Activated B cell treated with CpG ODN at 0.5 μM for 24 hours (primary cell): ENCODE measurements at regions of chr13 and their contacts with region 1.

Region 1: GRCh38 chr13:74077792-74078191 is 56.4 kb downstream of the KLF12 start:
- DNase-seq: no peak
- ATAC-seq: no peak
- H3K4me3 Mint-ChIP-seq: no peak overlapping the region
- H3K27ac Mint-ChIP-seq: no peak overlapping the region
- H3K4me1 Mint-ChIP-seq: peaks cover 73% of the 10 kb centered on the region
- H3K27me3 Mint-ChIP-seq: no peaks in the 10 kb centered on the region
- CTCF ChIP-seq: no peak

Region 2: DNA sequence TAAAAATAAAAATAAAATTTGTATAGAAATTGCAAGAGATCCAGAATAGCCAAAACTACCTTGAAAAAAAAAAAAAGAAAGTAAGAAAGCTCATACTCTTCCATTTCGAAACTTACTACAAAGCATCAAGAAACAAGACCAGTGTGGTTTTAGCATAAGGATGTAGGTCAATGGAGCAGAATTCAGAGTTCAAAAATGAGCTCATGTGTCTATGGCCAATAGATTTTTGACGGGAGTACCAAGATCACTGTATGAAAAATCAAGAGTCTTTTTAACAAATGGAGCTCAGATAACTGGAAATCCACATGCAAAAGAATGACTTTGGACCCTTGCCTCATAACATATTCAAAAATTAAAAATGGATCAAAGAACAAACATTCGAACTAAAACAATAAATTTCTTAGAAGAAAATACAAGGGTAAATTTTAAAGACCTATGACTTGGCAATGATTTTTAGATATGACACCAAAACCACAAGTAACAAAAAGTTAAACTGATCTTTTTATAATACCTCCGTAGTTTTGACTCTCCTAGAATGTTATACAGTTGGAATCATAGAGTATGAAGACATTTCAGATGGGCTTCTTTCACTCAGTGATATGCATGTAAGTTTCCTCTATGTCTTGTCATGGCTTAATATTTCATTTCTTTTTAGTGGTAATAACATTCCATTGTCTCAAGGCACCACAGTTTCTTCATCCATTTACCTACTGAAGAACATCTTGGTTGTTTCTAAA is 13.2 kb after region 1 on chr13:
- CTCF ChIA-PET with region 1: no interaction called
- POLR2A ChIA-PET with region 1: no interaction called
- intact Hi-C with region 1: loop called (anchors 2 kb)
- DNase-seq: no peak
- ATAC-seq: no peak
- H3K4me3 Mint-ChIP-seq: no peak overlapping the region
- H3K27ac Mint-ChIP-seq: peak overlapping the region; percentile 85
- H3K4me1 Mint-ChIP-seq: peaks cover 58% of the 10 kb centered on the region
- H3K27me3 Mint-ChIP-seq: no peaks in the 10 kb centered on the region
- CTCF ChIP-seq: no peak

Region 3: DNA sequence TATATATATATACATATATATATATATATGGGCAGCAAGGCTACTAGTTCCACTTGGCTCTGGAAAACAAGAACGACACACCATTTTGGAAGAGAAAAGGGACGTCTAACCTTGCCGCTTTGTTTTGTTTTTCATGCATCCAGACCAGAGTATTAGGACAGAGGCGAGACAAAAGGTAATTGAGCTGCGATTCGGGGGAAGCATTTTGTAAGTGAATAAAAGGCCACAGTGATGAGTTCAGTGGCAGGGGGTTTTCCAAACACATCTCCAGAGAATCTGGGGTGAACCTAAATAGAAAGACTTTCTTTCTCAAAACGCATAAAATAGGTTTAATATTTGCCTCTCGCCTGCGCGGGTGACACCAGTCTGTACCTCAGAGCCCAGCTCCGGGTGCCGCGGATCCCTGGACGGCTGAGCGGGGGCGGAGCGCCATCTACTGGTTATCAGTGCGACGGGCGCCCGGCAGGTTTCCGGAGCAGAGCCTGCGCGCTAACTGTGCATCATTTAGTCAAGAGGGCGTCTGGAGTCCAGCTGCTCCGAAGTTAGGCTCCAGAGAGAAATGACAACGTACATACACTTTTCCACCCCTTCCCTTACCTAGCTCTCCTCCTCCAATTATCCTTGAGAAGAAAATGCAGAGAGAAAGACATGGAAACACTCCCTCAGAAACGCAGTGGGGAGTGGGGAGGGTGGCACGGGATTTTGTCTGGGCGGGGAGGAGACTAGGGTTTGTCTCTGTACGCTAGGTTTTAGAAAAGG is 1141.9 kb after region 1 on chr13:
- CTCF ChIA-PET with region 1: no interaction called
- POLR2A ChIA-PET with region 1: no interaction called
- intact Hi-C with region 1: no loop called
- DNase-seq: peak; percentile 65
- ATAC-seq: peak; percentile 83
- H3K4me3 Mint-ChIP-seq: peak overlapping the region; percentile 36
- H3K27ac Mint-ChIP-seq: no peak overlapping the region
- H3K4me1 Mint-ChIP-seq: peaks cover 6% of the 10 kb centered on the region
- H3K27me3 Mint-ChIP-seq: peaks cover 18% of the 10 kb centered on the region
- CTCF ChIP-seq: peak; percentile 69